ENCODE measurements at regions of chr22 and their contacts with region 1.

Region 1: DNA sequence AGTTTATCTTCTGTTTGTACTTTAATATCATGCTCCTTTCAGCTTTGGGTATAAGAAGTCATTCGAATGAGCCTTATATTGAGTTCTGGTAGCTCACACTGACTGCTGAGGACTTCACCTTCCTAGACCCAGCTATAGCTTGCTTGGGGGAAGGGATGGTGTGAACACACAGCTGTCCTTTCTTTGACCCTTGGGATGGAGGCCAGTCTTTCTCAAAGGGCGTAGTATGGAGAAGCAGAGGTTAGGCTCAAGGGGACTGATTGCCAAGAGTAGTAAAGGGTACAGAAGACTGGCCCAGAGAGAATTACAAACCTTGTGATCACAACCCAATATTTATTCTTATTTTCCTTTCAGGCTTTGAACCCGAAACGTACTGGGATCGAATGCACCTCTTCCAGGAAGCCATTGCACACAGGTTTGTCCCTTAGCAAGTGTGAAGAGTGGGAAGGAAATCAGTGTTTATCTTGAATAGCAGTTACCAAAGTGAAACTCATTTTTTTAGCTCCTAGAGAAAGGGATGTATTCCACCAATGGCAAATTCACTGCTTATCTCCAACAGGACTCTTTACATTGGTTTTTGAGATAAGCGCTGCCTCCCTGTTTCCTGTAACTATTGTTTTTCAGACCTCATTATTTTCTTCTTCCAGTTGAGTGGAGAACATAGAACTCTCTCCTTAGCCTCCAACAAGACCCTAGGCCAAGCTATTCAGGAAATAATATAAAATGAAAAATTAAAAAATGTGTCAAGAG is 42.8 kb upstream of the YWHAH start:
- DNase-seq: no peak
- ATAC-seq: no peak

Region 2: GRCh38 chr22:31776231-31776630 is 125.3 kb before region 1 on chr22:
- intact Hi-C with region 1: no loop called
- DNase-seq: no peak
- ATAC-seq: no peak

Region 3: DNA sequence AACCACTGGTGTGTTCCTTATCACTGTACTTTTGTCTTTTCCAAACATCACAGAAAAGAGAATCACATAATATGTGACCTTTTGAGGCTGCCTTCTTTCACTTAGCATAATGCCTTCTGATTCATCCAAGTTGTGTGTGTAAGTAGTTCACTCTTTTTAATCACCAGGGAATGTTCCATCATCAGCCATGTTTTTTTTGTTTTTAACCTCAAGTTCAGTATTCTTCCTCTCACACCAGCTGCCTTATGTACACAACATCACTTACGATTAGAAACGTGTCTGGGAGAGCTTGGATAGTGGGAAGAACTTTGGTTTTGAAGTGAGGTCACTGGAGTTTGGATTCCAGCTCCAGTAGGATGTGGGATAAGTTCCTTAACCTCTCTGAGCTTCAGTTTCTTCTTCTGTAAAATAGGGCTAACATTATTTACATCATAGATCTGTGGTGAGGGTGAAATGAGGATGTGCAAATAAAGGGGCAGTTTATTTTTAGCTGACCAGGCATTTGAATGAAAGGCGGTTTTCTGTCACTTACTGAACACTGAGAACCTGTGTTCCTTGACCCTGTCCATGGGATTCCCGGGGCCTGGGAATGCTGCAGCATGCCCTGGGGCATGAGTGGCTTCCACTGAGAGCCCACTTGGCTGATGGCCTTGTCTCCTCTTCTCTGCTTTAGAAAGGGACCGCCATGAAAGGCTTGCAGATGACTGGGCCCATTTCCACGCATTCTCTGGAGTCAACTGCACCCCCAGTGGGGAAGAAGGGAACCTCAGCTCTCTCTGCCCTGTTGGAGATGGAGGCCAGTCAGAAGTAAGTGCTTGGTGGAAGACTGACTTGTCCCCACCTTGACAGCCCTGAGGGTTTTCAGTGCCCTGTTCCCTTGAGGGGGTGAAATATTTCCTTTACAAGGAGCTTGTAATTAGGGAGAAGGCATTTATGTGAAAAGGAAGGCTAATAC is 55.1 kb before region 1 on chr22:
- intact Hi-C with region 1: loop called (anchors 10 kb)
- DNase-seq: no peak
- ATAC-seq: no peak

Measured in Right ventricle myocardium superior (tissue), 1 donor.